SK-N-SH (cell line): ENCODE measurements at regions of chr20 and their contacts with region 1.

Region 1: DNA sequence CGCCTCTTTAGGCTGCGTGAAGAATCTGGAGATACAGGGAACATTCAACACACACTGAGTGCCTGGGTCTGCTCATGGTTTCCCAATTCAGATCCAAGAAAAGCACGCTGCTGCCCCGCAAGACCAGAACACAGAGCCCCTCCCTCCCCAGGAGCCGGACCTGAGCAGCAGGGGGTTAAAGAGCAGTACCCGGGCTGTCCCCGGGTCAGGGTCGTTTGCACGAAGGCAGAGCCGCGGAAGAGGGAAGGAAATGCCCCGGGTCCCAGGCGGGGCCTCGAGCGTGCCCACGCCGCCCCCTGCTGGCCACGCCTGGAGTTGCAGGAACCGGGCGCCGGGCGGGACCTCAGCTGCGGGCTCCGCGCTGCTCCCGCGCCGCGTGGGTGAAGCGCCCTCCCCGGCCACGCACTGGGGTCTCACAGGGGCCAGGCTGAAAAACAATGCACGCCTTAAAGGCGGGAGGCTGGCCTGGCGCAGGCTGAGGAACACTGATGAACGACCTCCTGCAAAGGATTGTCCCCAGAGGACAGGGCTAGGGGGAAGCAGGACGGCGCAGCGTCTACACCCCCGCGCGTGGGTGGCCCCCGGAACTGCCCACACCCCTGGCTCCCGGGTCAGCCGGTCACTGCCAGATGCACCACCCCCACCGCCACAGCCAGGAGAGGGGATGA is 48.9 kb downstream of the ANKRD60 start:
- DNase-seq: peak; percentile 92
- H3K4me3 ChIP-seq: peak overlapping the region; percentile 36 to 41; a peak in 3 of 4 replicates
- H3K27ac ChIP-seq: peak overlapping the region in 1 of 2 experiments; percentile 58; a peak in 1 of 4 replicates
- H3K4me1 ChIP-seq: peaks cover 0 to 47% of the 10 kb centered on the region in 2 experiments; a peak in 2 of 4 replicates
- H3K27me3 ChIP-seq: no peaks in the 10 kb centered on the region
- CTCF ChIP-seq: peak; percentile 95
- EP300 ChIP-seq: no peak
- RAD21 ChIP-seq: peak; percentile 92

Region 2: DNA sequence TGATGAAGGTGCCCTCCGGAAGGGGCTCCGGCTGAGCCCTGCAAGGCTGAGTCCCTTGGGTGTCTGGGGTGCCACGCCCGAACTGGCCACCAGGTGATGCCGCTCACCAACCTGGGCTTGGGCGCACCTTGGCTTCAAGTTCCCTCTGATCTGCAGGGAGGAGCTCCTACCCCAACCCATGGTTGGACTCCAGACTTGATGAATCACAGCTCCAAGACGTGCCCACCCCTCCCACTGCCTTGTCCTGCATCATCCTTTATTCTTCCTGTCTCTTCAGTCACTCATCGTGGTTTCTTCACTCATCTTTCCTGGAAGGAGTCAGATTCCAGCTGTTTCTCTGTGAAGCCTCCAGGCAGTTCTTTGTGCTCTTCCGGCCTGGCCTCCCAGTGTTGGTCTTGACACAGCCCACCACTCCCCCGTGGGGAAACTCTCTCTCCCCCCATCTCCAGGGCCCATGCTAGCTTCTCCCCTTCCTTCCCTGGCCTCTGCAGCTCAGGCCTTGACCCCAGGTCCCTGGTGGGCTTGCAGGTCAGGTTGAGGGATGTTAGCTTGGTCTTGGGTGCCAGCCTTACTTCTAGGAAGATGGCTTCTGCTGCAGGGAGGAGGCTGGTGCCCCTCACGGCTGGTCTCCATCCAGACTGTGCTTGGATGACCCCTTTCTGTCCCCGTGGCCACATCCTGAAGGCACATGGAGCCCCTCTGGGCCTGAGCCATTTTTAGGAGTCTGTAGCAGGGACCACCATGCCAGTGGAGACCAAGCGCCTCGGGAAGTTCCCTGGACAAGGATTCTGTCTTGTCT is 556.8 kb before region 1 on chr20:
- CTCF ChIA-PET with region 1: interaction called, 18 read pairs
- POLR2A ChIA-PET with region 1: no interaction called
- DNase-seq: peak; percentile 84
- H3K4me3 ChIP-seq: no peak overlapping the region
- H3K27ac ChIP-seq: no peak overlapping the region
- H3K4me1 ChIP-seq: peaks cover 0 to 10% of the 10 kb centered on the region in 2 experiments; a peak in 1 of 4 replicates
- H3K27me3 ChIP-seq: no peaks in the 10 kb centered on the region
- CTCF ChIP-seq: peak; percentile 78
- EP300 ChIP-seq: no peak
- RAD21 ChIP-seq: peak; percentile 87

Region 3: DNA sequence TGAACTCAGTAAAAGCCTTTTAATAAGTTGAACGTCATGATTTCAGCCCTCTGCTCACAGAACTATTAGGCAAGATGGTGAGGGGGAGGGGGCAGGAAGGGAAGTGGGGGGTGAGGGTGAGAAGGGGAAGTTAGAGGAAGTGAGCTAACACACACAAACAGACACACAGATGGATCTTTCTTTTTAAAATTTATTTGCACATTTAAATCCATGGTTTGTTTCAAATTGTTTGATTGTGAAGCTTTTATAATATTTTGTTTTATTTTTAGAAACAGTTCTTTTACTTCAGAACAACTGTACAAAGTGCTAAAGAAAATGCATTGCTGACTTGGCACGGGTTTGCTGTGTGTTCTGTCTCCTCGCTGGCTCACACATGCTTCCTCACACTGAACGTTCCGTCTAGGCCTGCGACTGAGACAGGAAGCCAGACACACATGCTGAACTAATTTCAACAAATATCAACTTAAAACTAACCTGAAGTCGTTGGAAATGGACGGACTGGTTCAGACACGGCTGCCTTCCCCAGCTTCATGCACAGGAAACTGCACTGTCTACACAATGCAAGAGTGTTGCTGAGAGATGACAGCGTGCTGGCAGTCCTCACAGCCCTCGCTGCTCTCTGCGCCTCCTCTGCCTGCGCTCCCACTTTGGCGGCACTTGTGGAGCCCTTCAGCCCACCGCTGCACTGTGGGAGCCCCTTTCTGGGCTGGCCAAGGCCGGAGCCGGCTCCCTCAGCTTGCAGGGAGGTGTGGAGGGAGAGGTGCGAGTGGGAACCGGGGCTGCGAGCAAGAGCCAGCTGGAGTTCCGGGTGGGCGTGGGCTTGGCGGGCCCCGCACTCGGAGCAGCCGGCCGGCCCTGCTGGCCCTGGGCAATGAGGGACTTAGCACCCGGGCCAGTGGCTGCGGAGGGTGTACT is 551.3 kb before region 1 on chr20:
- CTCF ChIA-PET with region 1: interaction called, 18 read pairs
- POLR2A ChIA-PET with region 1: no interaction called
- DNase-seq: no peak
- H3K4me3 ChIP-seq: no peak overlapping the region
- H3K27ac ChIP-seq: peak overlapping the region in 1 of 2 experiments; percentile 60; a peak in 1 of 4 replicates
- H3K4me1 ChIP-seq: peaks cover 0 to 9% of the 10 kb centered on the region in 2 experiments; a peak in 1 of 4 replicates
- H3K27me3 ChIP-seq: no peaks in the 10 kb centered on the region
- CTCF ChIP-seq: no peak
- EP300 ChIP-seq: no peak
- RAD21 ChIP-seq: no peak

Region 4: DNA sequence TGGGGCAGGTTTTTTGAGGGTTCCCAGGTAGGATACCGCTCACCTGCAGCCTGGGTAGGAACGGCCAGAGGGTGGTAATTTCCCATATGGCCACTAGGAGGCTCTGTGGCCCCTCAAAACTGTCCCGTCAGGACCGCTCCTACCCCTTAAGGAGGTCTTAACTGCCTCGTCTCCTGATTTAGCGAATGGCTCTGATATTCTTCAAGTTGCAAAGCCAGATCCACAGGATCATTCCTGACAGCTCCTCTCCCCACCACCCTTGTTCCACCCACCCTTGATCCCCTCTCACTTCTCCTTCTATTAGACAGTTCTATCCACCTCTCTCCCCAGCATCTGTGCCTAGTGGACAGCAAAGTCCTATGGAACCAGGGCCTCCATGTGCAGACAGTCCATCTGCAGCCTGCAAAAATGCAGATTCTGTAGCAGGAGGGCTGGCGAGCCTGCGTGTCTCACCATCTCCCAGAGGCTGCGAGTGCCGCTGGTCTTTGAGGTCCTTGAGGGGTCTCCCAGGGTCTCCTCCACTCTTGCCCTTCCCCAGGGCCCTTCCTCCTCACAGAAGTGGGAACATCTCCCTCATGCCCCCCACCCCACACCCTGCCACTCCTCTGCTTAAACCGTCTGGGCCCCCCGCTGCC is 525.1 kb before region 1 on chr20:
- CTCF ChIA-PET with region 1: interaction called, 23 read pairs
- POLR2A ChIA-PET with region 1: no interaction called
- DNase-seq: peak; percentile 93
- H3K4me3 ChIP-seq: no peak overlapping the region; a peak in 1 of 4 replicates
- H3K27ac ChIP-seq: peak overlapping the region in 1 of 2 experiments; percentile 17; a peak in 2 of 4 replicates
- H3K4me1 ChIP-seq: peaks cover 0 to 16% of the 10 kb centered on the region in 2 experiments; a peak in 1 of 4 replicates
- H3K27me3 ChIP-seq: no peaks in the 10 kb centered on the region
- CTCF ChIP-seq: peak; percentile 93
- EP300 ChIP-seq: no peak
- RAD21 ChIP-seq: peak; percentile 92

Region 5: GRCh38 chr20:57991211-57991881 is 188.2 kb before region 1 on chr20:
- CTCF ChIA-PET with region 1: no interaction called
- POLR2A ChIA-PET with region 1: no interaction called
- DNase-seq: peak; percentile 57
- H3K4me3 ChIP-seq: no peak overlapping the region
- H3K27ac ChIP-seq: peak overlapping the region; percentile 65 to 72
- H3K4me1 ChIP-seq: peaks cover 4 to 59% of the 10 kb centered on the region in 2 experiments; a peak in 3 of 4 replicates
- H3K27me3 ChIP-seq: no peaks in the 10 kb centered on the region
- CTCF ChIP-seq: no peak
- EP300 ChIP-seq: peak in 1 of 2 experiments; percentile 61; a peak in 3 of 4 replicates
- RAD21 ChIP-seq: no peak; the same call in 1 of the 2 replicates

Region 6: GRCh38 chr20:58001381-58001780 is 178.2 kb before region 1 on chr20:
- CTCF ChIA-PET with region 1: interaction called, 10 read pairs
- POLR2A ChIA-PET with region 1: no interaction called
- DNase-seq: peak; percentile 84
- H3K4me3 ChIP-seq: no peak overlapping the region
- H3K27ac ChIP-seq: peak overlapping the region in 1 of 2 experiments; percentile 97; a peak in 2 of 4 replicates
- H3K4me1 ChIP-seq: peaks cover 0 to 66% of the 10 kb centered on the region in 2 experiments; a peak in 2 of 4 replicates
- H3K27me3 ChIP-seq: no peaks in the 10 kb centered on the region
- CTCF ChIP-seq: no peak
- EP300 ChIP-seq: peak in 1 of 2 experiments; percentile 67; a peak in 2 of 4 replicates
- RAD21 ChIP-seq: no peak; the same call in none of the 2 replicates

Region 7: DNA sequence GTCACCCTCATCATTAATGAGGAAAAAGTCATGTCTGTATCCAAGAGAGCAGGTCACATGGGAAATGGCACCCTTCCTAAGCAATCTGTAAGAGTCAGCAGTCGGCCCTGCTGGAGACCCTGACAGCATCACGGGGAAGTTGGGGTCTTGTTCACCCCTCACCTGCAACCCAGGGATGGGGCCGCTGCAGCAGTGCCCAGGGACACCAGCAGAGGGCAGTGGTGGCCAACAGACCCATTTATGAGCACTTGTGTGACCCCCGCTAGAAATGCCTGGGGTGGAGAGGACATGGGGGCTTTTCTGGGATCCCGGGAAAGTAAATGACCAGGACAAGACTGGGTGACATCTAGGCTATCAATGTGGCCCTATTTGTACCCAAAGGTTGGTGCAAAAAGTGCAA is 13.0 kb after region 1 on chr20:
- CTCF ChIA-PET with region 1: interaction called, 12 read pairs
- POLR2A ChIA-PET with region 1: no interaction called
- DNase-seq: peak; percentile 65
- H3K4me3 ChIP-seq: no peak overlapping the region; a peak in 1 of 4 replicates
- H3K27ac ChIP-seq: no peak overlapping the region
- H3K4me1 ChIP-seq: no peaks in the 10 kb centered on the region; a peak in 1 of 4 replicates
- H3K27me3 ChIP-seq: peaks cover 5% of the 10 kb centered on the region; the same call in 1 of the 2 replicates
- CTCF ChIP-seq: peak; percentile 71
- EP300 ChIP-seq: no peak
- RAD21 ChIP-seq: peak; percentile 48

Region 8: DNA sequence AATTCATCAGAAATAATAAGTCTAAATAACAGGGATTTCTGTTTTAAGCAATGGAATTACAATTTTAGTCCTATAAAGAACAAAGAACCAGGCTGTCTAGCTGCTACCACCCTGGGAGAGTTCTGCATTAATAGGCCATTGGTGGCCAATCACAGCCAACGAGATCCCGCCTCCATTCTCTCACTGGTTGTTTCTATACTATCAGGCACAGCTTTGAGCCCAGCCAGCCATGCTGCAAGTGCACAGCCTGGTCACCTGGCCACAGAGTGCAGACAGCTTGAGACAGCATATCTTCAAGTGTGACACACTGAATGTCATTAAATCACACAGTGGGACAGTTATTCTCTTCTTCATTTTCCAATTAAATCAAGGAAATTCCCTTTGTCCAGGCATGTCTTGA is 113.9 kb after region 1 on chr20:
- CTCF ChIA-PET with region 1: no interaction called
- POLR2A ChIA-PET with region 1: no interaction called
- DNase-seq: peak; percentile 61
- H3K4me3 ChIP-seq: no peak overlapping the region
- H3K27ac ChIP-seq: no peak overlapping the region
- H3K4me1 ChIP-seq: peaks cover 3 to 7% of the 10 kb centered on the region in 2 experiments; a peak in 3 of 4 replicates
- H3K27me3 ChIP-seq: no peaks in the 10 kb centered on the region
- CTCF ChIP-seq: no peak
- EP300 ChIP-seq: no peak
- RAD21 ChIP-seq: no peak